ENCODE measurements at regions of chr22 and their contacts with region 1.

Region 1: DNA sequence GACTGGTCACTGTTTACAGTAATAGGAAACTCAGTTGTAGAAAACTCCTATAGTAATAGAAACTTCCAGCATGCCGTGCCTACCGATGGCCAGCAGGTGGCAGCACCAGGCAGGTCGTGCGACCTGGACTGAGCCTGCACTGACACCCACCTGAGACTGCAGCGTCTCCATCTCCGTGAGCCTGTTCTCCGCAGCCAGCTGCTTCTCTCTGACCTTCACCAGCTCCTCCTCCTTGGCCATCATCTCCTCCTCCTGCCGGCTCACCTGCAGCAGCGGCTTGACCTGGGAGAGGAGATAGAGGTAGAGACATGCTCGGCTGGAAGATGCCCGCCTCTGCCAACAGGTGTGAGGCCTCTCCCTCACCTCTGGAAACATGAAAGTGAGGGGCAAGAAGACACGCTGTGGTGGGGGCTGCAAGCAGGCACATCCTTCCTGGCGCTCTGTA is 48.5 kb downstream of the APOL1 start:
- DNase-seq: peak in 1 of 2 donors; percentile 65
- ATAC-seq: peak; percentile 59 to 83
- H3K4me3 ChIP-seq: no peak overlapping the region
- H3K27ac ChIP-seq: peak overlapping the region in 2 of 4 donors; percentile 29 to 31
- H3K4me1 ChIP-seq: no peaks in the 10 kb centered on the region
- H3K27me3 ChIP-seq: no peaks in the 10 kb centered on the region
- CTCF ChIP-seq: peak; percentile 78 to 97 (median 96)
- POLR2A ChIP-seq: no peak

Region 2: DNA sequence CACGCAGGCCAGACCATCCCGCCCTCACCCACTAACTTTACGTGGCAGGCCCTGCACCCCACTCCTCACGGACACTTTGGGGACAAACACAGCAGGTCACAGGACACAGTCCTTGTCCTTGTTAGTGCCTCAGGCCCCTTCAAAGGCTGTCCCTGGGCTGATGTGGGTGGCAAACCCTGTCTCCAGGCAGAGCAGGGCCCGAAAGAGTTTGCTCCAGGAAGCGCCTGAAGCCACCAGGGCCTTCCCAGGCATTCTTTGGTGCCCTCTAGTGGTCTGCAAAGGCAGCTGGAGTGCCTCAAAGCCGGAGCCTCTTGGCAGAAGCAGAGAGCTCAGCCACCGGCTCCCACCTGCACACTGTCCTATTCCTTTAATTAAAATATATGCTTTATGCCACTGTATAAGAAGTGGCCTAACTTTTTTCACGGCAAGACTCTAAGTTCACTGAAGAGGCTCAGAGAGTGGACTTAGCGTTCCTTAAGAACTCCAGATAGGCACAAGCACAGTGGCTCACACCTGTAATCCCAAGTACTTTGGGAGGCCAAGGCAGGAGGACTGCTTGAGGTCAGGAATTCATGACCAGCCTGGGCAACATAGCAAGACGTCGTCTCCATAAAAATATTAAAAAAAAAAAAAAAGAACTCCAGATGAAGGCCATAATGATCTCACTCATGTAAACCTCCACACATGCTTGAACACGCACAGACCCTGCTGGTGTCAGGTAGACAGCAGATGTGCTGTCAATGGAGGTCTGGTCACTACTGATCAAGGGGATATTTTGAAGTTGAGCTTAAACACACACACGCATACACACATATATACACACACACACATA is 169.0 kb after region 1 on chr22:
- in situ Hi-C with region 1: loop called (anchors 5 kb)
- intact Hi-C with region 1: loop called (anchors 1 kb)
- DNase-seq: peak; percentile 68 to 83
- ATAC-seq: peak; percentile 50 to 55
- H3K4me3 ChIP-seq: no peak overlapping the region
- H3K27ac ChIP-seq: peak overlapping the region; percentile 91 to 98 (median 94)
- H3K4me1 ChIP-seq: peaks cover 47 to 48% of the 10 kb centered on the region in 2 donors
- H3K27me3 ChIP-seq: no peaks in the 10 kb centered on the region
- CTCF ChIP-seq: peak; percentile 85 to 98 (median 96)
- POLR2A ChIP-seq: no peak

Region 3: DNA sequence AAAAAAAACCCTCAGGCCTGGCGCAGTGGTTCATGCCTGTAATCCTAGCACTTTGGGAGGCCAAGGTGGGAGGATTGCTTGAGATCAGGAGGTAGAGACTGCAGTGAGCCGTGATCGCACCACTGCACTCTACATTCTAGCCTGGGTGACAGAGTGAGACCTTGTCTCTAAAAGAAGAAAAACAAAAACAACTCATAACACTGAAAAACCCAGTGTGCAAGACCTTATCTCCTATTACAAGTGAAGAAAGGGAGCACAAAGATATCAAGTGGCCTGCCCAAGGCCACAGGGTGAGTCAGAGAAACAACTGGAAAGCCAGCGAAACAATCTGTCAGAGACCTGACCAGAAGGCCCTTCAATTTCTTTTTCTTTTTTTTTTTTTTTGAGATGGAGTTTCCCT is 177.6 kb after region 1 on chr22:
- in situ Hi-C with region 1: loop called (anchors 5 kb)
- intact Hi-C with region 1: no loop called
- DNase-seq: no peak
- ATAC-seq: no peak
- H3K4me3 ChIP-seq: no peak overlapping the region
- H3K27ac ChIP-seq: peak overlapping the region in 3 of 4 donors; percentile 33 to 56 (median 42)
- H3K4me1 ChIP-seq: peaks cover 20 to 28% of the 10 kb centered on the region in 2 donors
- H3K27me3 ChIP-seq: no peaks in the 10 kb centered on the region
- CTCF ChIP-seq: no peak
- POLR2A ChIP-seq: no peak

Measured in gastrocnemius medialis (tissue), 4 donors.